ENCODE measurements at regions of chr13 and their contacts with region 1.

Region 1: GRCh38 chr13:24038841-24039330 is 121.6 kb upstream of the SPATA13 start:
- DNase-seq: peak; percentile 50
- H3K4me3 ChIP-seq: no peak overlapping the region
- CTCF ChIP-seq: no peak

Region 2: DNA sequence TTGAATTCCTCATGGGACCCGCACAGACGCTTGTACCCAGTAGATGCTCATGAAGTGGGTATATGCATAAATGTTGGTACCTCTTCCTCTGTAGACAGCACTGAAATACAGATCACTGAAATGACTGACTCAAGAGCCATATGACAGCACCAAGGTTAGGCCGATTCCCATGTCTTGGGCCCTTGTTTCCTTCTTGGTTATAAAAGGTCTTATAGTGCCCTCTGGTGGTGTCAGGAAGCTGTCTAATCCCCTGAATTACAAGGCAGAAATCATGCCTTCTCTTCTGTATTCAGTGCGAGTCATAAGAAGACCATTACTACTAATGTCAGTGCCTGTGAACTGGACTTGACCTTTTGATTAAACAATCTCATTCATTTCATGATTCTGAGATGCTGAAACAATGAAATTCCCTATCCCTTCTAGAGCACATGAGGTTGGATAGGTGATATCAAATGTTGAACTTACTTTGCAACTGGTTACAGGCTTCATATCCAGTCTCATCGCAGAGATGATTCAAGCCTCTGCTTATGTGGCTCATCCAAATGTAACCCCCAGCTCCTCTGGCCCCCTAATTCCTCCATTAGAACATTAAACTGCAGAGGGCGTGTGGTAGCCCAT is 181.3 kb after region 1 on chr13:
- in situ Hi-C with region 1: loop called (anchors 25 kb)
- DNase-seq: peak; percentile 76
- H3K4me3 ChIP-seq: no peak overlapping the region
- CTCF ChIP-seq: peak; percentile 70